ENCODE measurements at regions of chr12 and their contacts with region 1.

Region 1: GRCh38 chr12:67692966-67693365 is 44.4 kb downstream of the DYRK2 start:
- DNase-seq: no peak
- H3K4me3 Mint-ChIP-seq: no peak overlapping the region
- H3K27ac Mint-ChIP-seq: no peak overlapping the region
- H3K4me1 Mint-ChIP-seq: peaks cover 20% of the 10 kb centered on the region
- H3K27me3 Mint-ChIP-seq: peaks cover 4% of the 10 kb centered on the region

Region 2: DNA sequence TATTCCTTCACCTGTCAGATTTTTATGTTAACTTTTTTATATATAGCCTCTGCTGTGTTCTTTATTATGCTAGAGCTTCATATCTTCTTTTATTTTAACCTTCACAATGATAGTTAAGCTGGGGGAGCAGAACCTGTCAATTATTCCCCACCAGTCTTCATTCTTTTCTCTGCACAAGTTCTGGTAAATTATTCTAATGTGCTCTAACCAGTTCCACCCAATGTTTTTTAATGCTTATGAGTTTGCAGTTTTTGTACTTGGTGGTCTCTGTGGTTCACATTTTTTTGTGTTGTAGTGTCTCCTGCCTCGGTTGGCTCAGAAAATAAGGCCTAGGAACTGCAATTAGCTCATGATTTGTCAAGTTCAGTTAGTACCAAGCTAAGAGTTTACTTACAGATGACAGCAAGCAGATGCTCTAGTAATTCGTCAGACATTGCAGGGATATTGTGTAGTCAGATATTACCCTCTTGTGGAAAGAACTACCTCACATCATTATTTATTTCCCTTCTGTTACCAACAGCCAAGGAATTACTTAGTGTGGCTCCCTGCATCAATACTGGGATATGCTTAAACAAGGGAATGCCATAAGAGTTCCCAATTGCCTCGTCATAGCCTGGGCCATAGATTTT is 29.9 kb before region 1 on chr12:
- CTCF ChIA-PET with region 1: no interaction called
- POLR2A ChIA-PET with region 1: no interaction called
- intact Hi-C with region 1: loop called (anchors 1 kb)
- DNase-seq: no peak
- H3K4me3 Mint-ChIP-seq: no peak overlapping the region
- H3K27ac Mint-ChIP-seq: no peak overlapping the region
- H3K4me1 Mint-ChIP-seq: peaks cover 69% of the 10 kb centered on the region
- H3K27me3 Mint-ChIP-seq: no peaks in the 10 kb centered on the region